ENCODE measurements at regions of chr1 and their contacts with region 1.

Region 1: DNA sequence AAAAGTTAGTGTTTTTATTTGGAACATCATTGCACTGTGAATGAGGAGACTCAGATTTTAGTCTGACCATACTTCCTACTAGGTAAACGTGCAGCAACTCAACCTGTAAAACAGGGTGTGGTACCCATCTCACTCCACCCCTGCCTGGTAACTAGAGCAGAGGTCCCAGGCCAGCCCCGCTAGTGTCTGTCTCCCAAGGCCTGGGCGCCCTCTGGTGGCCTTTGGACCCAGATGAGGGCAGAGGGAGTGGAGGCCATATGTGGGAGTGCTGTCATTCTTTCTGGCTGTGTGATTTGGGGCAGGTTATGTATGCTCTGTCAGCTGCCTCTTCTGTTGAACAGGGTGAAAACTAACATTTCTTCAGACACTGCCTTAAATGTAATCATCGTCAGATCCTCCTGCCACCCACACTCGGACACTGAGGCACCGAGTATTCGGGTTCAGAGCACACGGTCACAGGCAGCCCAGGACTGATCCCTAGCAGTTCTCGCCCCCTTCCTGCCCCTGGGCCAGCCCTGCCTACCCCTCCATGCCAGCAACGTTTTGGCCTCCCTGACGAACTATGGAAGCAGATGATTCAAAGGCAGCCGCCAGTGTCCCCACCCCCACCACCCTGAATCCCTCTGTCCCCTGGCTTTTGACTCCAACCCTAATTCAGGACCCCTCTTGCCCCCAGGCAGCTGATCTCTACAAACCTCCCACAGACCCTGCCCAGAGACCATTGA is 76.0 kb downstream of the CD247 start:
- DNase-seq: peak; percentile 63 to 93
- H3K4me3 ChIP-seq: no peak overlapping the region
- H3K4me1 ChIP-seq: no peaks in the 10 kb centered on the region
- H3K27me3 ChIP-seq: no peaks in the 10 kb centered on the region

Region 2: GRCh38 chr1:167066333-167067122 is 375.8 kb before region 1 on chr1:
- in situ Hi-C with region 1: loop called (anchors 5 kb)
- DNase-seq: peak; percentile 52 to 88
- H3K4me3 ChIP-seq: no peak overlapping the region
- H3K4me1 ChIP-seq: no peaks in the 10 kb centered on the region
- H3K27me3 ChIP-seq: peaks cover 3% of the 10 kb centered on the region; the same call in 1 of the 2 replicates

Region 3: GRCh38 chr1:167273027-167273800 is 169.1 kb before region 1 on chr1:
- in situ Hi-C with region 1: loop called (anchors 5 kb)
- DNase-seq: peak; percentile 59 to 60
- H3K4me3 ChIP-seq: no peak overlapping the region
- H3K4me1 ChIP-seq: peaks cover 13% of the 10 kb centered on the region
- H3K27me3 ChIP-seq: no peaks in the 10 kb centered on the region